ENCODE measurements at regions of chr19 and their contacts with region 1.

Region 1: GRCh38 chr19:7088999-7089398 is 19.5 kb downstream of the ZNF557 start:
- DNase-seq: no peak
- ATAC-seq: no peak
- H3K4me3 ChIP-seq: no peak overlapping the region
- H3K27ac ChIP-seq: no peak overlapping the region
- H3K4me1 ChIP-seq: no peaks in the 10 kb centered on the region
- H3K27me3 ChIP-seq: no peaks in the 10 kb centered on the region
- CTCF ChIP-seq: no peak

Region 2: DNA sequence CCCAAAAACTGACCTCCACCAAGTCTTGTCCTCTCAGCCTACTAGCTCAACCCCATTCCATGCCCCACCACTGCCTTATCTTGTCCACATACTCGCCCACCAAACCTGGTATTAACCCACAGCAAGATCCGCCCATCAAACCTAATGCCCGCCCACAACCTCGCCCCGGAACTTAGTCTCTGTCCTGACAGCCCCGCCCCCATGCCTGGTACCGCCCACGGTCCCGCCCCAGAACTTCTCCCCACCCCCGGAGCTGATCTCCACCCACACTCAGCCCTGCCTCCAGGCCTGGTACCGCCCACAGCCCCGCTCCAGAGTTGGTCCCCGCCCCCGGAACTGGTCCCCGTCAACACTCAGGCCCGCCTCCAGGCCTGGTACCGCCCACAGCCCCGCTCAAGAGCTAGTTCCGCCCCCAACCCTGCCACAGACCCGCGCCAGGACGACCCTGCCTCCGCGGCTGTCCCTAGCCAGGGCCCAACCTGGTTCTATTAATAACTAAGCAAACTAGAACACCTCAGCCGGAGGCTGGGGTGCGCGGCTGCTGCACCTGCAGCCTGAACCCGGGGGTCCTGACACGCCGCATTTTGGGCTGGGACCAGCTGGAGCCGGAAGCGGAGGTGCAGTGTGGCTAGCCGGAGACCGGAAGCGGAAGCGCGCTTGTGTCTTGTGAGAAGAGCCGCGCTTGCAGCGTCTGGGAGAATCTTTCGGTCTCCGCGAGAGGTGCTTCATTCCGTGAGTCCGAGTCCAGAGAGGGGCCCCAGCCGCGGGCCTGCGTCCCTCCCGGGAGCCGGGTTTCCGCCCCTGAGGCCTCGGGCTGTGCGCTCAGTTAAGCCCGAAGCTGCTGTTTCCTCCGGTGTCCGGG is 19.7 kb before region 1 on chr19 and contains the start of gene ZNF557:
- CTCF ChIA-PET with region 1: no interaction called
- POLR2A ChIA-PET with region 1: no interaction called
- intact Hi-C with region 1: no loop called
- DNase-seq: peak; percentile 98
- ATAC-seq: peak; percentile 99
- H3K4me3 ChIP-seq: peak within 1 kb of the TSS; percentile 96
- H3K27ac ChIP-seq: peak within 1 kb of the TSS; percentile 52
- H3K4me1 ChIP-seq: peaks cover 6% of the 10 kb centered on the region; the same call in 1 of the 2 replicates
- H3K27me3 ChIP-seq: no peaks in the 10 kb centered on the region
- CTCF ChIP-seq: no peak
- total RNA-seq, gene ZNF557: 12.9 and 13.7 TPM in 2 replicates

Region 3: DNA sequence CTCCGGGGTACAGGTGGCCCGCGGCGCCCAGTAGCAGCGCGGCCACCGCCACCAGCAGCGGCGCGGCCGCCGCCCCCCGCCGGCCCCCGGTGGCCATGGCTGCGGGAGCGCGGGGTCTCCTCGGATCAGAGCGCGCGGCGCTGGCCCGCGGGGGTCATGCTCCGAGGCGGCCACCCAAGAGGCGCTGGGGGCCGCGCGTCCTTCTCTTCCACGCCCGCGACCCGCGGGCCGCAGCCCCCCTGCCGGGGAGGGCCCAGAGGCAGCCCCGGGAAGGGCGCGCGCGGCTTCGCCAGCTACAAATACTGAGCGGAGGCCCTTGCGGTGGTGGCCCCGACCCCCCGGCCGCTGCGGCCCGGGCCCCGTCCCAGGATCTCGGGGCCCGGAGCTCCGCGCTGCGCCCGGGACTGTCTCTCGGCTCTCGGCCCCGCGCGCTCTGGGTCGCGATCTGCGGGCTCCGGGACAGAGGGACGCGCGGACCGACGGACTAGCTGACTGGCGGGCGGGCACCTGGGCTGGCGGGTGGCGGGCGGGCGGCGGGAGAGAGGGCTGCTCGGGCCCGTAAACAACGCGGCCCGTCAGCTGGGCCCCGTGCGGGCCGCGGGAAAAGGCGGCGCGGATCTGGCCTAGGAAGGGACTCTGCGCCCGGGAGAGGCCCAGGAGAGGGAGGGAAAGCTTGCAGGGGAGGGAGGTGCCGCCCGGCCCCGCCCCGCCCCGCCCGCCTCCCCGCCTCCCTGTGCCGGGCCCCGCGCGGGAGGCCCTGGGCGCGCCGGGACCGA is 205.0 kb after region 1 on chr19 and contains the start of gene INSR:
- CTCF ChIA-PET with region 1: no interaction called
- POLR2A ChIA-PET with region 1: interaction called, 16 read pairs
- intact Hi-C with region 1: no loop called
- DNase-seq: peak; percentile 94
- ATAC-seq: peak; percentile 91
- H3K4me3 ChIP-seq: peak within 1 kb of the TSS; percentile 70
- H3K27ac ChIP-seq: no peak within 1 kb of the TSS
- H3K4me1 ChIP-seq: peaks cover 16% of the 10 kb centered on the region
- H3K27me3 ChIP-seq: peaks cover 6% of the 10 kb centered on the region; the same call in 1 of the 2 replicates
- CTCF ChIP-seq: no peak
- total RNA-seq, gene INSR: 13.7 and 41.5 TPM in 2 replicates

Measured in PC-3 (cell line).